Endothelial cell of umbilical vein (primary cell): ENCODE measurements at regions of chr20 and their contacts with region 1.

Region 1: GRCh38 chr20:4592316-4593148 is 129.2 kb upstream of the PRND start:
- DNase-seq: peak; percentile 48
- H3K4me3 ChIP-seq: peak overlapping the region; percentile 19 to 32 (median 21)
- H3K27ac ChIP-seq: peak overlapping the region; percentile 44
- H3K4me1 ChIP-seq: peaks cover 7% of the 10 kb centered on the region
- H3K27me3 ChIP-seq: peaks cover 2 to 5% of the 10 kb centered on the region in 2 experiments
- CTCF ChIP-seq: peak; percentile 88 to 94
- POLR2A ChIP-seq: no peak

Region 2: GRCh38 chr20:4108495-4109306 is 483.8 kb before region 1 on chr20:
- CTCF ChIA-PET with region 1: interaction called, 3 read pairs
- POLR2A ChIA-PET with region 1: no interaction called
- dilution Hi-C with region 1: no loop called
- intact Hi-C with region 1: loop called (anchors 1 kb)
- DNase-seq: peak; percentile 79
- H3K4me3 ChIP-seq: no peak overlapping the region
- H3K27ac ChIP-seq: no peak overlapping the region
- H3K4me1 ChIP-seq: peaks cover 6% of the 10 kb centered on the region
- H3K27me3 ChIP-seq: peaks cover 0 to 2% of the 10 kb centered on the region in 2 experiments
- CTCF ChIP-seq: peak; percentile 95 to 97
- POLR2A ChIP-seq: no peak

Region 3: GRCh38 chr20:4252005-4252404 is 340.5 kb before region 1 on chr20:
- CTCF ChIA-PET with region 1: interaction called, 11 read pairs
- POLR2A ChIA-PET with region 1: no interaction called
- dilution Hi-C with region 1: no loop called
- intact Hi-C with region 1: no loop called
- DNase-seq: no peak
- H3K4me3 ChIP-seq: no peak overlapping the region
- H3K27ac ChIP-seq: no peak overlapping the region
- H3K4me1 ChIP-seq: no peaks in the 10 kb centered on the region
- H3K27me3 ChIP-seq: peaks cover 13 to 50% of the 10 kb centered on the region in 2 experiments
- CTCF ChIP-seq: no peak
- POLR2A ChIP-seq: no peak

Region 4: DNA sequence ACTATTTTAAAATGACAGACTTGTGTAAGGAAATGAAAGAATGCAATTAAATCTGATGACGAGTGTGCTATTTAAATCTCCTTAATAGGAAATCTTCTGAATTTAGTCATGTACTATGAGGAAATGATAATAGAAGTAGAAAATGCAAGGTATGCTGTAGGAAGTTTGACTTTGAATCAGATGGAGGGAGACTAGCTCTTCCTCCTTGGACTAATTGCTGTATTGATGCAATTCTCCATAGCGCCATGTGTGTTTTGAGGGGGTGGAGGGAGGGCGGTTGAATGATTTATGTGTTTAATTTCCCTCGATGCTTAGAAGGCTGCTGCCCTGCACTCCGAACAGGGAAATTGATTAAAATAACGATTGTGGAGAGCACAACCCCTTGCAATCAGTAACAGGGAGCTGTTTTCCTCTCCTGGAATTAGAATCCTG is 85.2 kb before region 1 on chr20:
- CTCF ChIA-PET with region 1: interaction called, 4 read pairs
- POLR2A ChIA-PET with region 1: no interaction called
- dilution Hi-C with region 1: no loop called
- intact Hi-C with region 1: loop called (anchors 1 kb)
- DNase-seq: peak; percentile 96
- H3K4me3 ChIP-seq: no peak overlapping the region
- H3K27ac ChIP-seq: peak overlapping the region; percentile 96
- H3K4me1 ChIP-seq: peaks cover 37% of the 10 kb centered on the region
- H3K27me3 ChIP-seq: no peaks in the 10 kb centered on the region
- CTCF ChIP-seq: no peak
- POLR2A ChIP-seq: no peak